Activated CD8-positive, alpha-beta T cell treated with anti-CD3 and anti-CD28 coated beads, Interleukin-2, amount 10 ng/mL, durations not matched to agents 7 days and 5 days (primary cell): ENCODE measurements at regions of chr3 and their contacts with region 1.

Region 1: GRCh38 chr3:138915503-138916498 is 31.1 kb downstream of the FOXL2 start:
- DNase-seq: peak; percentile 81
- ATAC-seq: peak; percentile 87
- H3K4me3 Mint-ChIP-seq: peak overlapping the region; percentile 71
- H3K27ac Mint-ChIP-seq: peak overlapping the region; percentile 74
- H3K4me1 Mint-ChIP-seq: peaks cover 5% of the 10 kb centered on the region
- H3K27me3 Mint-ChIP-seq: peaks cover 27% of the 10 kb centered on the region

Region 2: DNA sequence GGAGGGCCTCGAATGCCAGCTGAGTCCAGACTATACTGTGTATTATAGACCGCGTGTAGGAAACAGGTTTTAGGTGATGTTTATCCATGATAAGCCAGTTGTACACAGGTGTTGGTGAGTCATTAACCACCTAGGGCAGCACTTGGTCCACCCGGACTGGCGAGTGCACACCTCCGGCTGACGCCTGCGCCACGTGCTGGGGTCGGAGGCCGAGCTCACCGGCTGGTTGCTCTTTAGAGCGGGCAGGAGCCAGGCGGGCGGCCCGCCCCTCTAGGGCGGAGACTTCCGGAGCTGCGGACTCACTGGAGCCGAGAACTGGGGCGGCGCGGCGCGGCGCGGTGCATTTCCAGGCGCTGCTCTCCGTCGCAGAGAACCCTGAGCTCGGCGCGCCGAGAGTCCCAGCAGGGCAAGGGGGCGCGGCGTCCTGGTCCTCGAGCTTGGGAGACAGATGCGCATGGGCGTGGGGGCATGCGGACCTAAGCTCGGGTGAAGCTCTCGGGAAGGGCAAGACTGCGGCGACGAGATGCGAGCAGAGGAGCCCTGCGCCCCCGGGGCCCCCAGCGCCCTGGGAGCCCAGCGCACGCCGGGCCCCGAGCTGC is 481.4 kb before region 1 on chr3 and contains the start of gene ESYT3:
- CTCF ChIA-PET with region 1: interaction called, 10 read pairs
- POLR2A ChIA-PET with region 1: no interaction called
- DNase-seq: peak; percentile 78
- ATAC-seq: peak; percentile 99
- H3K4me3 Mint-ChIP-seq: peak within 1 kb of the TSS; percentile 73
- H3K27ac Mint-ChIP-seq: no peak within 1 kb of the TSS
- H3K4me1 Mint-ChIP-seq: peaks cover 13% of the 10 kb centered on the region
- H3K27me3 Mint-ChIP-seq: peaks cover 52% of the 10 kb centered on the region
- total RNA-seq, gene ESYT3: 0.16 to 0.18 TPM

Region 3: DNA sequence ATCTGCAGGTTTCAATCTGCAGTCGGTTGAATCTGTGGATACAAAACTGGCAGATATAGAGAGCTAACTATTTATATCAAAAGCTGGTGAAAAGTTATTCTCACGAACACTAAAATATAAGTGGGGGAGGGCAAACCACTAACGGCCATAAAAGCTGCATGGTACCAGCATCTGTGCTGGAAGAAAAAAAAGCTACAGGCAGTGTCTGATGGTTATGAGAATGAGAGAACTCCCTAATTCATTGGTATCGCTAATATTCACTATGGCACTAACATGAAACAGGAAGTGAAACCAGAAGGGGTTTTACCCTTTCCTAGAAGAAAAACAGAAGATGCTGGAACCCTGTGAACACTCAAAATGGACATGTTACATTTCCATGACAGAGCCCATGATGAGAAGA is 337.7 kb before region 1 on chr3:
- CTCF ChIA-PET with region 1: interaction called, 11 read pairs
- POLR2A ChIA-PET with region 1: no interaction called
- DNase-seq: no peak
- ATAC-seq: peak; percentile 63
- H3K4me3 Mint-ChIP-seq: peak overlapping the region; percentile 34
- H3K27ac Mint-ChIP-seq: peak overlapping the region; percentile 81
- H3K4me1 Mint-ChIP-seq: peaks cover 27% of the 10 kb centered on the region
- H3K27me3 Mint-ChIP-seq: no peaks in the 10 kb centered on the region

Region 4: DNA sequence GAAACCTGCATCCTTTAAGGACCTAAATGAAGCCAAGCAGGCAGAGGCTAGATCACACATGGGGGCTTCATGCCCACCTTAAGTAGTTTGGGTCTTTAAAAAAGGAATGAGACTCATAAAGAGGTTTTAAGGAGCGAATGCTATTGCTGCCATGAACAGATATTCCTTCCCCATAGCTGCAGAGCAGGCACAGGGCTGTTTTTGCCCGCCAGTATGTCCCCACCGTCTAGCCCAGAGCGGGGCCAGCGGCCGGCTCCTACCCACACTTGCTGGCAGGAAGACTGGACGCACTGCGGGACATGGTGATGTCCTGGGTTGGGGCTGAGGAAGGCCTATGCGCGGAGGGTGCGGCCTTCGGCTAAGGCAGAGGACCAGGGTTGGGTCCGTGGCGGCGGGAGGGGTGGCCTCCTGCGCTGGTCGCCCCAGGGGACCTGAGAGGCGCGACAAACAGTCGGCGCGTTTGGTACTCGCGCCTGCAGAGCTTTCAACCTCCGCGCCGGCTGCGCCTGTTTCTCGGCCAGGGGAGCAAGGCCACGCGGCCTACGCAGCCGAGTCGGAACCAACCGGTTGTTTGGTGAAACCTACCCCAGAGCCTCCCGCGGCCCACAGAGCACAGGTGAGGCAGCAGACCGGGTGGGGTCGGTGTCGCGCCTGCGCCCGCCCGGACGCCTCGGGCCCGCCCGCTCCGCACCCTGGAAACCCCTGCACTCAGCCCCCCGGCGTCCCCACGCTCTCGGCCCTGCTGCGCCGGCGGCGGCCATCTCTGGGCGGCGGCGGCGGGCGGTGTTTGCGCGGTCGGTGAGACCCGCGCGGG is 307.3 kb before region 1 on chr3 and contains the start of gene FAIM:
- CTCF ChIA-PET with region 1: interaction called, 14 read pairs
- POLR2A ChIA-PET with region 1: no interaction called
- DNase-seq: peak; percentile 73
- ATAC-seq: peak; percentile 80
- H3K4me3 Mint-ChIP-seq: peak within 1 kb of the TSS; percentile 74
- H3K27ac Mint-ChIP-seq: peak within 1 kb of the TSS; percentile 88
- H3K4me1 Mint-ChIP-seq: peaks cover 16% of the 10 kb centered on the region
- H3K27me3 Mint-ChIP-seq: no peaks in the 10 kb centered on the region
- total RNA-seq, gene FAIM: 4.2 to 5.9 TPM

Region 5: DNA sequence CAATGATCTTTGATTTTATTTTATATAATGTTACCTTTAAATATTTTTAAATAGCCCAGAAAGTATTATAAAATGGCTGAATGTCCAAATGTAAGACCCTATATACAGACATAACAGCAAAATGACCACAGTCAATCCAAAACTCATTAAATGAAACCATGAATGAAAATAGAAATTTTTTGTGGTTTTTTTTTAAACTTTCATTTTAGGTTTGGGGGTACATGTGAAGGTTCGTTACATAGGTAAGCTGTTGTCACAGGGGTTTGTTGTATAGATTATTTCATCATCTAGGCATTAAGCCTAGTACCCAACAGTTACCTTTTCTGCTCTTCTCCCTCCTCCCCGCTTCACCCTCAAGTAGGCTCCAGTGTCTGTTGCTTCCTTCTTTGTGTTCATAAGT is 198.5 kb before region 1 on chr3:
- CTCF ChIA-PET with region 1: interaction called, 33 read pairs
- POLR2A ChIA-PET with region 1: no interaction called
- DNase-seq: no peak
- ATAC-seq: no peak
- H3K4me3 Mint-ChIP-seq: no peak overlapping the region
- H3K27ac Mint-ChIP-seq: no peak overlapping the region
- H3K4me1 Mint-ChIP-seq: peaks cover 13% of the 10 kb centered on the region
- H3K27me3 Mint-ChIP-seq: no peaks in the 10 kb centered on the region

Region 6: GRCh38 chr3:138890555-138891187 is 25.1 kb before region 1 on chr3:
- CTCF ChIA-PET with region 1: interaction called, 11 read pairs
- POLR2A ChIA-PET with region 1: no interaction called
- DNase-seq: no peak
- ATAC-seq: no peak
- H3K4me3 Mint-ChIP-seq: no peak overlapping the region
- H3K27ac Mint-ChIP-seq: no peak overlapping the region
- H3K4me1 Mint-ChIP-seq: no peaks in the 10 kb centered on the region
- H3K27me3 Mint-ChIP-seq: peaks cover 4% of the 10 kb centered on the region

Region 7: DNA sequence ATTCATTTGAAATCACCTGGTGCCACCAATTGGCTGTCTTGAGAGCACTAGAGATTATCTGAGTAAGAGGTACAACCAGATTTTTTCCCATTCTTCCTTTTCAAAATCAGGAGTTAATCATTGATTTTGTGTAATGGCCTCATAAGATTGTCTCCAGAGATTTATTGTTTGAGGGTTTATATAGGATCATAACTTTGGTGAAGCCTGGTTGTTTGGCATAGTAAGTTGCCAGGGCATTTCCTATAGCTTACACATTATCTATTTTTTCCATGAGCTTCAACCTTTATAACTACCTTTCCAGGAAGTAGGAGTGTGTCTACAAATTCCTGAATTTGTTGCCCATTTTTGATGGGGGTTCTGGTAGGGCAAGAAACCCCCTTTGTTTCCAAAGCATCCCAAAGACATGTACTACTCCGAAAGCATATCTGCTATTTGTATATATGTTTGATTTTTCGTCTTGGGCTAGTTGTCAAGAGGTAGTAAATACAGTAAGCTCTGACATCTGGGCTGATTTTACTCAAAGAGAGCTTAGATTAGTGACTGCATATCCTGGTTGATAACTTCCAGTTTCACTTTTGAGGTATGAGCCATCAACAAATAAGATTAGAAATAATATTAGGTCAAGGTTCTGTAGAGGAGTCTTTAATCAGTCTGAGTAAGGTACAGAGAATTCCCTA is 116.7 kb after region 1 on chr3:
- CTCF ChIA-PET with region 1: no interaction called
- POLR2A ChIA-PET with region 1: no interaction called
- DNase-seq: no peak
- ATAC-seq: no peak
- H3K4me3 Mint-ChIP-seq: no peak overlapping the region
- H3K27ac Mint-ChIP-seq: no peak overlapping the region
- H3K4me1 Mint-ChIP-seq: no peaks in the 10 kb centered on the region
- H3K27me3 Mint-ChIP-seq: peaks cover 4% of the 10 kb centered on the region